Naive thymus-derived CD4-positive, alpha-beta T cell (primary cell): ENCODE measurements at regions of chr5 and their contacts with region 1.

Region 1: GRCh38 chr5:131209506-131210150 is 38.9 kb downstream of the LYRM7 start:
- DNase-seq: peak; percentile 11 to 91 (median 84)
- ATAC-seq: peak; percentile 98
- H3K4me3 ChIP-seq: peak overlapping the region; percentile 21
- H3K4me3 Mint-ChIP-seq: peak overlapping the region; percentile 72 to 90 (median 80)
- H3K27ac ChIP-seq: peak overlapping the region; percentile 77
- H3K27ac Mint-ChIP-seq: peak overlapping the region; percentile 91 to 98 (median 96)
- H3K4me1 ChIP-seq: peaks cover 18 to 37% of the 10 kb centered on the region in 2 donors
- H3K4me1 Mint-ChIP-seq: peaks cover 42 to 75% (median 61%) of the 10 kb centered on the region in 7 donors
- H3K27me3 ChIP-seq: no peaks in the 10 kb centered on the region
- H3K27me3 Mint-ChIP-seq: no peaks in the 10 kb centered on the region

Region 2: GRCh38 chr5:131170540-131171275 is 38.9 kb before region 1 on chr5 and contains the start of gene LYRM7:
- CTCF ChIA-PET with region 1: interaction called, 3 read pairs
- POLR2A ChIA-PET with region 1: interaction called, 8 read pairs
- intact Hi-C with region 1: loop called (anchors 1 kb)
- DNase-seq: peak; percentile 70 to 99 (median 95)
- ATAC-seq: peak; percentile 98
- H3K4me3 ChIP-seq: peak within 1 kb of the TSS; percentile 74
- H3K4me3 Mint-ChIP-seq: peak within 1 kb of the TSS; percentile 95 to 100 (median 98)
- H3K27ac ChIP-seq: peak within 1 kb of the TSS; percentile 82
- H3K27ac Mint-ChIP-seq: peak within 1 kb of the TSS; percentile 92 to 98 (median 97)
- H3K4me1 ChIP-seq: peaks cover 11 to 16% of the 10 kb centered on the region in 2 donors
- H3K4me1 Mint-ChIP-seq: peaks cover 37 to 72% (median 63%) of the 10 kb centered on the region in 7 donors
- H3K27me3 ChIP-seq: no peaks in the 10 kb centered on the region
- H3K27me3 Mint-ChIP-seq: no peaks in the 10 kb centered on the region
- total RNA-seq, gene LYRM7: 8.2 to 18.8 (median 16.3) TPM

Region 3: DNA sequence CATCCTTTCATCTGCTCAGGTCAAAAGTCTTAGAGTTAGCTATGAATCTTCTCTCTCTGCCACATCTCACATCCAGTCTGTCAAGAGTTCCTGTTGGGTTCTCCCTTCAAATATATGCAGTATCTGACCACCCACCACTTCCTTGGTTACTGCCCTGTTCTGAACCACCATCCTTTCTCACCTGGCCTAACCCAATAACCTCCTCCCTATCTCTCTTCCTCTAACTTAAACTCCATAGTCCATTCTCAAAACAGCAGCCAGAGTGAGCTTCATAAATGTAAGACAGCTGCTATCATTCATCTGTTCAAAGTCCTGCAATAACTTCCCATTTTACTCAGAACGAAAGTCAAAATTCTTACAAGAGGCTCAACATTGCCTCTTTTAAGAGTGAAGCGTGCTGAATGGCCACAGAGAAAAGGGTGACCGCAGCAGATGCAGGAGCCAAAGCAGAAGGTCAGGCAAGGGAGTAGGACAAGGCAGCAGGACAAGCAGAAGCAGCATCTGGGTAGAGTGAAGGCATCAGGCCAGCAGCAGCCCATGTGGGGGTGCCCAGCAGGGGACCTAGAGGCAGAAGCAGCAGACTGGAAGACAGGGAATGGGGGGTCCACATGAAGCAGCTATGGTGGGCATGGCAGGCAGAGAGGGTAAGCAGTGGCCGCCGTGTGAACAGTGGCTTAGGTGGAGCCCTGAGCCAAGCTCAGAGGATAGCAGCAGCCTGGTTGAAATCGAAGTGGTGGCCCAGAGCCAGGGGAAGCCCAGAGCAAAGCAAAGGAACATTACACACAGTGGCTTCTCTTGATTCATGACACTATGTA is 15.0 kb after region 1 on chr5:
- CTCF ChIA-PET with region 1: interaction called, 7 read pairs
- POLR2A ChIA-PET with region 1: interaction called, 14 read pairs
- intact Hi-C with region 1: loop called in 1 of 2 experiments (anchors 1 kb)
- DNase-seq: peak in 2 of 9 donors; percentile 7 to 12
- ATAC-seq: peak; percentile 73
- H3K4me3 ChIP-seq: no peak overlapping the region
- H3K4me3 Mint-ChIP-seq: no peak overlapping the region
- H3K27ac ChIP-seq: no peak overlapping the region
- H3K27ac Mint-ChIP-seq: no peak overlapping the region
- H3K4me1 ChIP-seq: peaks cover 14 to 15% of the 10 kb centered on the region in 2 donors
- H3K4me1 Mint-ChIP-seq: peaks cover 2 to 16% (median 9%) of the 10 kb centered on the region in 7 donors
- H3K27me3 ChIP-seq: no peaks in the 10 kb centered on the region
- H3K27me3 Mint-ChIP-seq: no peaks in the 10 kb centered on the region

Region 4: GRCh38 chr5:131252824-131253171 is 43.2 kb after region 1 on chr5:
- CTCF ChIA-PET with region 1: interaction called, 4 read pairs
- POLR2A ChIA-PET with region 1: interaction called, 37 read pairs
- intact Hi-C with region 1: loop called (anchors 1 kb)
- DNase-seq: peak; percentile 41 to 90 (median 87)
- ATAC-seq: peak; percentile 93
- H3K4me3 ChIP-seq: peak overlapping the region; percentile 72
- H3K4me3 Mint-ChIP-seq: peak overlapping the region; percentile 80 to 97 (median 96)
- H3K27ac ChIP-seq: peak overlapping the region; percentile 78
- H3K27ac Mint-ChIP-seq: peak overlapping the region; percentile 91 to 97 (median 95)
- H3K4me1 ChIP-seq: peaks cover 51 to 54% of the 10 kb centered on the region in 2 donors
- H3K4me1 Mint-ChIP-seq: peaks cover 62 to 89% (median 67%) of the 10 kb centered on the region in 7 donors
- H3K27me3 ChIP-seq: no peaks in the 10 kb centered on the region
- H3K27me3 Mint-ChIP-seq: no peaks in the 10 kb centered on the region

Region 5: GRCh38 chr5:131303537-131303936 is 93.9 kb after region 1 on chr5:
- CTCF ChIA-PET with region 1: no interaction called
- POLR2A ChIA-PET with region 1: no interaction called
- intact Hi-C with region 1: no loop called
- DNase-seq: no peak
- ATAC-seq: no peak
- H3K4me3 ChIP-seq: no peak overlapping the region
- H3K4me3 Mint-ChIP-seq: peak overlapping the region in 5 of 10 donors; percentile 0 to 46 (median 28)
- H3K27ac ChIP-seq: peak overlapping the region; percentile 23
- H3K27ac Mint-ChIP-seq: peak overlapping the region in 6 of 9 donors; percentile 2 to 62 (median 36)
- H3K4me1 ChIP-seq: peaks cover 45 to 55% of the 10 kb centered on the region in 2 donors
- H3K4me1 Mint-ChIP-seq: peaks cover 53 to 77% (median 71%) of the 10 kb centered on the region in 7 donors
- H3K27me3 ChIP-seq: no peaks in the 10 kb centered on the region
- H3K27me3 Mint-ChIP-seq: no peaks in the 10 kb centered on the region

Region 6: GRCh38 chr5:131417240-131417869 is 207.7 kb after region 1 on chr5:
- CTCF ChIA-PET with region 1: no interaction called
- POLR2A ChIA-PET with region 1: no interaction called
- intact Hi-C with region 1: no loop called
- DNase-seq: peak; percentile 61 to 78 (median 74)
- ATAC-seq: peak; percentile 81
- H3K4me3 ChIP-seq: no peak overlapping the region
- H3K4me3 Mint-ChIP-seq: peak overlapping the region in 7 of 10 donors; percentile 27 to 70 (median 45)
- H3K27ac ChIP-seq: peak overlapping the region; percentile 23
- H3K27ac Mint-ChIP-seq: peak overlapping the region; percentile 68 to 95 (median 81)
- H3K4me1 ChIP-seq: peaks cover 8 to 14% of the 10 kb centered on the region in 2 donors
- H3K4me1 Mint-ChIP-seq: peaks cover 17 to 52% (median 46%) of the 10 kb centered on the region in 7 donors
- H3K27me3 ChIP-seq: no peaks in the 10 kb centered on the region
- H3K27me3 Mint-ChIP-seq: no peaks in the 10 kb centered on the region